HEK293T (cell line): ENCODE measurements at regions of chr12 and their contacts with region 1.

Region 1: DNA sequence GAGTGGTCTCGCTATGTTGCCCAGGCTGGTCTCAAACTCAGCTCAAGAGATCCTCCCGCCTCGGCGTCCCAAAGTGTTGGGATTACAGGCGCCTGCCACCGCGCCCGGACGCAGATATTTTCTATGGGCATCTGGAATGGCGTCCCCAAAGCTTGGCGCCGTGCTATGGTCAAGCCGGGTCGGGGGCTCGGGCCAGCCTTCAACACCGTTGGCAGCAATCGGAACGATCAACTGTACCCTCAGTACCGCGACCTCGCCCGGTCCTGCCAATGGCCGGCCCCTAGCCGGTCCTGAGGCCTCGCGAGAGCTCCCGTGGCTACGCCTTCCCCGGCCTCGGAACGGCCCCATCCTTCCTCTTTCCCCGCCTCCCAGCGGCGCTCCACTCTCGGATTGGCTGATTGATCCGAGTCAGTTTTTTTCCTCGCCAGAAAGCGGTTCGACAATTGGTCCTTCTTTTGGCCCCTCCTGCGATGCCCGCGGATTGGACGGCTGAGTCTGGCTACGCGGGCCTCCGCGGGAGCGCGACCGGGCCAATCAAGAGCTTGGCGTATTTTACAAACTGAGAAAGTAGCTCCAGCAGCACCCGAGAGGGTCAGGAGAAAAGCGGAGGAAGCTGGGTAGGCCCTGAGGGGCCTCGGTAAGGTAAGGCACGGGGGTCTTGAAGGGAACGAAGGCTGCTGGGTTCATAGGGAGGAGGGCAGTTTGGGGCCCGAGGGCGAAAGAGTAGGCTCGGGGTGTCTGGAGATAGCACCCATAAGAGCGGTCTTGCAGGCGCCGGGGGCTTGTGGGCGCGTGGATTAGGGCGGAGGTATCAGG is at the start of gene TROAP:
- DNase-seq: peak; percentile 97

Region 2: DNA sequence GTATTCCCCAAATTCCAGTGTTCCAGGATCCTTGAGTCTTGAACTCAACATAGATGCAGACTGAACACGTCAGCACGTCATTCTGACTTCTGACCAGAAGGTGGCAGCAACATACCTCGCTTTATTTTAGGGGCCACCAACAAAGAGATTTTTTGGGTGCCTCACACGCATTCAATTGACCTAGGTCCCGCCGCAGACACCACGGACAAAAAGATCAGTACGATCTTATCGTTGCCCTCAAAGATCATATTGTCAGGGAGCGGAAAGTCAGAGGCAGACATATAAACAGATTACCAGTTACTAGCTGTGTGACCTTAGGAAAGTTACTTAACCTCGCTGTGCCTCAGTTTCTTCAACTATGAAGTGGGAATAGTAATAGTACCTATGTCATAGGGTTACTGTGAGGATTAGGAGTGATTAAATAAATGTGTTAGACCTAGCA is 34.5 kb before region 1 on chr12:
- CTCF ChIA-PET with region 1: interaction called, 11 read pairs
- POLR2A ChIA-PET with region 1: interaction called, 15 read pairs
- DNase-seq: peak; percentile 76

Region 3: GRCh38 chr12:49304161-49304560 is 18.8 kb before region 1 on chr12:
- CTCF ChIA-PET with region 1: no interaction called
- POLR2A ChIA-PET with region 1: interaction called, 68 read pairs
- DNase-seq: no peak

Region 4: DNA sequence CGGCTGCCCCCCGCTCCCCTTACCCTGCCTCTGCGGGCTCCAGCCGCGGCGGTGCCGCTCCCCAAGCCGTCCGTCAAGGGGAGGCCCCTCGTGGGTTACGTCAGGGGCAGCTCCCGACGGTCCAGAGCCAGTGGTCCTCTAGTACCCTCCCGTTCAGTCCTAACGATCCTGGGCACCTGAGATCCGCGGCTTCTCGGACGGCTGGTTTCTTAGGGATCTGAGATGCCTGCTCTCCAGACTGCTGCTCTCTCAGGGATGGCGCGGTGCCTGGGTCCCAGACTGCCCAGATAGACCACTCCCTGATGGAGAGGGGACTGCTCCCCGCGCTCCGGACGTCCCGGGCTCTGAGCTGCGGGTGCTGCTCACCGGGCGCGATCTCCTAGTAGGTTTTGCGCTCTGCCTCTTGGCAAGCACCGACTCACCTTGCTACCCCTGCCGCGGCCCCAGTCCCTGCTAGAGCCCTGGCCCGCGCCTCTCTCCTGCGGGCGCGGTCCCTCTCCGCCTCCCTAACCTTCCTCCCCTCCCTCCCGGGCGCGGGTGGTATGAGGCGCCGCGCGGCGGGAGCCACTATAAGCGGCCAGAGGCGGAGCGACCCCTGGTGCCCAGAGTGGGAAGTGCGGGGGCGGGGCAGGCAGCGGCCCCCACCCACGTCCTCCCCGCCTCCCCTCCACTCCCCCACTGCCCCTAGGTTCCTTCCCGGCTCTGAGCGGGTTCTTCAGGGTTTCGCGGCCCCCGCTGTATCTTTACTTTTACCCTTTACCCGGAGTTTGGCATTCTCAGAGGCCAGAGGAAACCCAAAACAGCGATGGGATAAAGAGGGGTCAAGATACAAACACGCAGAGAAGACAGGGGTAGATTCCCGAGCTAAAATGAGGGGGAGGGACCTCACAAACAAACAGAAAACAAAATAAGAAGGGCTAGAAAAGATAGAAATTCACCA is 14.0 kb after region 1 on chr12 and contains the start of gene C1QL4:
- CTCF ChIA-PET with region 1: interaction called, 42 read pairs
- POLR2A ChIA-PET with region 1: interaction called, 43 read pairs
- DNase-seq: peak; percentile 90

Region 5: DNA sequence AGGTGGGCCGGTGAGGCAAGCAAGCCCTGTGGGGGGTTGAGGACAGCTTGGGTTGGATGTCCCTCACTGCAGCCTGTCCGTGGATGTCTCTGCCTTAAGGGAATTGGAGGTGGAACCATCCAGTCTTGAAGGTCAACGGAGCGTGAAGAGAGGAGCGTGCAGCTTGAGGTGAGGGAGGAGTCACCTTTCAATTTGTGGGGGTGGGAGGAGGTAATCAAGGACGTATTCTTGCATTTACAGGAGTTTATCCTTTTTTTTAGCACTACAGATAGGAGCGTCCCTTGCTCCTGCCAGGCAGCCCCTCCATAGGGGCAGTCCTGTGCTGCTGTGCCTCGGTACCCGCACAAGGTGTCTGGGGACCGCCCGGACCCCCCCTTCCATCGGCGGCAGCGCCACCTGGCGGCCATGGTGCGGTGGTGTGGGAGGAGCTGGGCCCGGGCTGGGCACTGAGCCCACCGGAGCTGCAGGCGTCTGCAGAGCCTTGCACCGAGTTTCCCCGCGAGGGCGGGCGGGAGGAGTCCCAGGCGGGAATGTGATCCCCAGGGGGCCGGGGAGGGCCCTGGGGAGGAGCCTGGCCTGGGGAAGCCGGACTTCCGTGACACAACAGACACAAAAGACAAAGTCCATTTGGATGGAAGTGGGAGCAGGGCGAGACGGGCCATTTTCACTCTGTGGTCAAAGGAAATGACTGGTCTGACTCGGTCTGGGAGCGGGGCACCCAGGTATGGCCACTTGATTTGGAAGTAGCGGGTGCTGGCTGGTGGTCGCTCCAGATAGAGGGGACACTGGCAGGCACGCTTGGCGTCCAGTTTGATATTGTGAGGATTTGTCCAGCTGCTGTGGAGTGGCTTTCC is 24.7 kb after region 1 on chr12:
- CTCF ChIA-PET with region 1: interaction called, 42 read pairs
- POLR2A ChIA-PET with region 1: interaction called, 42 read pairs
- DNase-seq: peak; percentile 89